Activated CD4-positive, alpha-beta T cell treated with anti-CD3 and anti-CD28 coated beads, Interleukin-2, amount 10 ng/mL, durations not matched to agents 24 days and 14 days (primary cell): ENCODE measurements at regions of chr6 and their contacts with region 1.

Region 1: DNA sequence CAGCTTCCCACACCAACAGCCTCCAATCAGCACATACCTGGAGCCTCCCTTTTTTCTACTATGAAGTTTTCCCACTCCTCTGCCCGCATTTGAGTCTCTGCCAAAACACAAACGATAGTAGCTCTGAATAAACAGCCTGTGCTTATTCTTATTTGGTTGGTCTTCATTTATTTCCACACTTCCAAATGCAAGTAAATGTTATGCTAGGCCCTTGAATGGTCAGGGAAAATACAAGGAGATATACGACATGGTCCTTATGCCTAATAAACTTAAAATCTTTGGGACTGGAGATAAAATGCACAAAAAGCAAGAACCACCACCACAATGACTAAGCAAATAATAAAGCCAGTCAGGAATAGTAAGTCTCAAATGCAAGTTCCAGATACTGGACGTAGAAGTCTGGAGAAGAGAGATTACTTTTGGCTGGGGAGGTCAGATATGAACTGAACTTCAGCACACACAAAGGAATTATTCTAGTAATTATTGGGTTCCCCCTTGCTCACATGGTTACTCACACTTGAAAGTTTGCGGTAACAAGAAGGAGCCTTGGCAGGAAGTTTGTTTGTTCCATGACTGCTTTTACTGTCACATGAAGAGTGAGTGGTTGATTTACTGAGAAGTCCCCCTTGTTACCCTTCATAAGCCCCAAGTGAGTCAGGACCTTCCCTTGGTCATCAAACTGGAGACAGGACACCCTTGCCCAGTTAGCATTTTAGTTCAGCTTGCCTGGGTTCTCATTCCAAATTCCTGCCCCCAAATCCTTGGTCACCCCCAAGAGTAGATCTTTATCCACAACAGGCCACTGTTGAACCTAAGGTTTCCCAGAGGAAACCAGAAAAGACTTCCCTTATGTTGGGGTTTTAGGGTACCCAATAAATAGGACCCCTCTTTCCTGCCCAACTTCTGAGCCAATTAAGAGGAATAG is 511.2 kb upstream of the JARID2 start:
- DNase-seq: peak; percentile 88
- H3K4me3 Mint-ChIP-seq: peak overlapping the region; percentile 54
- H3K27ac Mint-ChIP-seq: peak overlapping the region; percentile 95
- H3K4me1 Mint-ChIP-seq: peaks cover 91% of the 10 kb centered on the region
- H3K27me3 Mint-ChIP-seq: no peaks in the 10 kb centered on the region

Region 2: DNA sequence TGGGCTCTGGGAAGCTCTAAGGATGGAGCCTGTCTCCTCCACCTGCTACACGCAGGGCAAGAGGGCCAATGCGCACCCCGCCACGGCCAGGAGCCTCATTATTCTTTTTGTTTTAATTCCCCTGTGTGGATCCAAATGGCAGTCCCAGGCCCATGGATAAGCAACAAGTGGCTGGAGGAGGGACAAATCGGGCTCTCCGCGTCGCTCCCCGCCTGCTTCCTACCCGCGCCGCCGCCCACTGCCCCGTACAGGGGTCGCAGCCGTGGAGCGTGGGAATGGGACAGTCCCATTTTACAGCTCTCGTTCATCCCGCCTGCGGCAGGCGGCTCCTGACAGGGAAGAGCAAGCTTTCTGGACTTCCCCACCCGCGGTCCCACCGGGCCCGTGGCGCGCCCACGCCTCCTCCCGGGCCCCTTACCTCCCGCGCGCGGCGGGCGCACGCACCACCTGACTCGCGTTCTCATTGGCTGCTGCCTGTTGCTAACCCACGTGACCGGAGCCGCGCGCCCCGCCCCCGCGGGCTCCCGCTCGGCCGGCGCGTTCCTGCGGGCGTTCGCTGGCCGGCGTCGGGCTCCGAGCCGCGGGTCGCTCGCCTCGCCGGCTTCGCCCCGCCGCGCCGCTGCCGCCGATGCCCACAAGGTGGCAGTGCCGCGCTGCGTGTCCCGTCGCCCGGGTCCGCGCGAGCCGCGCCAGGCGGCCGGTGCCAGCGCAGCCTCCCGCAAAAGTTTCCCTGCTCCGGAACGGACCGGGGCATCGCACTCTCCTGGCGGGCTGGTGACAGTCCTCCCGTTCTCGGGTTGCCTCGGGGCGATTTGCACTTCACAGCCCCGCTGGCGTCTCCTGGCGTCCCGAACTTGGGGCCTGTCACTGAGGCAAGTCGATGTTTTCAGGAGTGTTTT is 523.8 kb before region 1 on chr6:
- intact Hi-C with region 1: loop called (anchors 1 kb)
- DNase-seq: peak; percentile 98
- H3K4me3 Mint-ChIP-seq: peak overlapping the region; percentile 85
- H3K27ac Mint-ChIP-seq: peak overlapping the region; percentile 85
- H3K4me1 Mint-ChIP-seq: peaks cover 21% of the 10 kb centered on the region
- H3K27me3 Mint-ChIP-seq: no peaks in the 10 kb centered on the region

Region 3: GRCh38 chr6:14423955-14424354 is 310.7 kb before region 1 on chr6:
- intact Hi-C with region 1: loop called (anchors 1 kb)
- DNase-seq: no peak
- H3K4me3 Mint-ChIP-seq: peak overlapping the region; percentile 23
- H3K27ac Mint-ChIP-seq: peak overlapping the region; percentile 88
- H3K4me1 Mint-ChIP-seq: peaks cover 25% of the 10 kb centered on the region
- H3K27me3 Mint-ChIP-seq: no peaks in the 10 kb centered on the region

Region 4: DNA sequence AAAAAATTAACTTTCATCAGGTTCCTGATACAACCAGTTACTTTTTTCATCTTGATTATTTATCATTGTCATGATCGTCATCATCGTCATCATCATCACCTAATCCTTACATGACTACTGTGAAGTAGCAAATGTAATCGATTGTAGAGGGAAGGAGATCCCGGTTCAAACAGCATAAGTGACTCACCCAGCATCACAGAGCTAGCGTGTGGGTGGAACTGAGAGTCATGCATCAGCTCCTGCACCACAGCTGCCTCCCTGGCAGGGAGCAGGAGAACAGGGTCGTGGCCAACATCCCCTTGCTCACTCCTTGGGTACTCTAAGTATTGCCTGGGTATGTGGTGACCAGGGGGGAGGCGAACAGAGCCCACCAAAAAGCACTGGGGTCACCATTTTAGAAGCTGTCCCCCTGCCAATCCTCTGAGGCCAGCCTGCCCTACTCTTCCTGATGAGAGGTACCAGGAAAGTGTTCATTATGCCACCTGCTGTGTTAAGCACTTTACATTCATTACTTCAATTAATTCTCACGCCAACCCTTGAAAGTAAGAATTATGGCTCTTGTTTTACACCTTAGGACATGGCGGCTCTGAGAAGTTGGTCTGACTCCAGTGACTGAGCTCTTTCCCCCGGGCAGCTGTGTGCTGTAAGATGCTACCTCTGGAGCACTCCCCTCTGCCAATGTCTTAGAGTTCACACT is 191.9 kb before region 1 on chr6:
- intact Hi-C with region 1: loop called (anchors 5 kb)
- DNase-seq: peak; percentile 74
- H3K4me3 Mint-ChIP-seq: peak overlapping the region; percentile 17
- H3K27ac Mint-ChIP-seq: peak overlapping the region; percentile 59
- H3K4me1 Mint-ChIP-seq: peaks cover 25% of the 10 kb centered on the region
- H3K27me3 Mint-ChIP-seq: peaks cover 2% of the 10 kb centered on the region

Region 5: DNA sequence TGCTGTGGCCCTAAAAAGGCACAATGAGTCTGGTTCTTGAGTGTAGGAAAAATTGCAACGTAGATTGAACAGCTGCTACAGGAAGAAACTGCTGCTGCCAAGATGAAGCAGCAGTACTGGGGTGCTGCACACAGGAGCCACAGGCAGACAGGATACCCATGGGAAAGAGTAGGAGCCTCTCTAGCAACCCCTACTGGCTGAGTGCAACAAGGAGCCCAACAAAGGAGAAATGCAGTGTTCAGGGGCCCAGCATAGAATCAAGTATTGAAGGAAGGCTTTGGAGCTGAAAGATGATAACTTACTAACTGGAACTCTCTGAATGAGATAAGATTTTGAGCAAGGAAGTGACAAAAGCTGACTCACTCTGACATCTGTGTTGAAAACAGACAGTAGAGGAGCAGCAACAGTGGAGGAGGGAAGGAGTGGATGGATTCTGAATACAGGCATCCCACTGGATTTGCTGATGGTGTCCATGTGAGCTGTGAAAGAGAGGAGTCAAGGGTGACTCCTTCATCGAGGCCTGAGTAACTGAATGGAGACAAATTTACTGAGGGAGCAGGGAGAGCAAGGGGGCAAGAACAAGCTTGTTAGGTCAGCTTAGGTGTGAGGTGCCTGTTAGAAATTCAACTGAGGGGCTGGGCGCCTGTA is 23.5 kb before region 1 on chr6:
- intact Hi-C with region 1: loop called (anchors 2 kb)
- DNase-seq: peak; percentile 90
- H3K4me3 Mint-ChIP-seq: peak overlapping the region; percentile 24
- H3K27ac Mint-ChIP-seq: peak overlapping the region; percentile 95
- H3K4me1 Mint-ChIP-seq: peaks cover 42% of the 10 kb centered on the region
- H3K27me3 Mint-ChIP-seq: no peaks in the 10 kb centered on the region

Region 6: DNA sequence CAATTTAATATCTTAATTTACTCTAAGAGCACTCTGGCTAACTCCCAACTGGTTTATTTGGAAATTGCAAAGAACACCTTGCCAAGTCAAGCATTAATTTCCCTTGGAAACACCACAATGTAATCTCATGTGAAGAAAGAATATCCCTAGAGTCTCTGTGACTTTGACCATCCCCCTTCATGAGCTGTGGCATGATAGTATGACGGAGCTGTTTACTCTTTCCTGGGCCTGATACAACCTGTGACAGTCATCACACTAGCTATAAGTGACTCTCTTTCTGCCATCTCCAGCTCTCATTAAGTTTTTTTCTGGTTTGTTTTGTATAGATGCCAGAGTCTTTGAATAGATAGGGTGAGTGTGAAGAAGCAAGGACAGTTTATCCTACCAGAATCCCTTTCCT is 40.9 kb after region 1 on chr6:
- intact Hi-C with region 1: no loop called
- DNase-seq: no peak
- H3K4me3 Mint-ChIP-seq: no peak overlapping the region
- H3K27ac Mint-ChIP-seq: no peak overlapping the region
- H3K4me1 Mint-ChIP-seq: no peaks in the 10 kb centered on the region
- H3K27me3 Mint-ChIP-seq: no peaks in the 10 kb centered on the region

Region 7: DNA sequence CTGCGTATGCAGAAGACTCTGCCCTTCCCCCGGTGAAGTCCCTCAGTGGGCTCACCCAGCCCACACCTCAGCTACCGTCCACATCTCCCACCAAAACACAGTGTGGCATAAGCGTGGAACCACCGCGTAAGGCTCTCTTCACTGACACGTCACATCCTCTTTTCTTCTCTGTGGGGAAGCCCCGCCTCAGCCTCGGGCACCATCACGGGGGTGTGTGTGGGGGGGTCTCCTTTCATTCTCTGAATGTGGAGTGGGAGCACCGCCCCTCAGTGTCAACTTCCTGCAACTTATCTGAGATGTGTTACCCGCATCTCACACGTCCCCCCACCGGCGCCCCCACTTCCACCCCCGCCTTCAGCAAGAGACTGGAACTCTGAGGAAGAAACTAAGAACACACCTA is 122.8 kb after region 1 on chr6:
- intact Hi-C with region 1: loop called (anchors 1 kb)
- DNase-seq: peak; percentile 82
- H3K4me3 Mint-ChIP-seq: peak overlapping the region; percentile 71
- H3K27ac Mint-ChIP-seq: peak overlapping the region; percentile 98
- H3K4me1 Mint-ChIP-seq: peaks cover 35% of the 10 kb centered on the region
- H3K27me3 Mint-ChIP-seq: no peaks in the 10 kb centered on the region

Region 8: DNA sequence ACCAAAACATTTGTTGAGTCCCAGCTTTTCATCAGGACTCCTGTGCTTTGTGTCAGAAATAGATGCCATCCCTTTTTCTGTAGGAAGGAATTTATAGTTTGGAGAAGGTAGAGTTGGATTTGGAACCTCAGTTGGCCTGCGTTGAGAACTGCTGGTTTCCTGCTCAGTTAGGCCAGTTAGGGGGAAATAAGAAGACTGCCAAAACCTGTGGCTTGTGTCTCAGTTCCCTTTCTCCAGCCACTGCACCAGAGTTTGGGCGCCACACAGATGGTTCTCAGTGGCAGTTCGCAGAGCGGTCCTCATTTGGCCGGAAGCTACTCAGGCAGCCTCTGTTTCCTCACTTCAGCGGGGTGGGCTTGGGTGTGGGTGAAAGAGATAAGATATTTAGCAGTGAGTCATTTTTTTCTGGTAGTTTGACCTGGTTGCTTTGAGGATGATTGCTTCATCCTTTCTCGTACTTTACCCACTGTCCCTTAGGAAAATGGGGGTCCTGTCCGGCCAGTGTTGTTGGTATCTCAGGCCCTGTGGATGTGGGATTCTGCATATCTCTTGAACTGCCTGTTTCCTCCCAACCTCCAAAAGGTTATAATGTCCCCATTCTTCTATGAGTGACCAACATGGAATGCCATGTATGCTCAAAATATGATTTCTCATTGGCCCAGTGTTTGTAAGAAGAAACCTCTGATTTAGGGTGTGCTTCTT is 564.9 kb after region 1 on chr6:
- intact Hi-C with region 1: loop called (anchors 5 kb)
- DNase-seq: peak; percentile 74
- H3K4me3 Mint-ChIP-seq: peak overlapping the region; percentile 20
- H3K27ac Mint-ChIP-seq: peak overlapping the region; percentile 65
- H3K4me1 Mint-ChIP-seq: peaks cover 68% of the 10 kb centered on the region
- H3K27me3 Mint-ChIP-seq: no peaks in the 10 kb centered on the region